MCF 10A (cell line): ENCODE measurements at regions of chr7 and their contacts with region 1.

Region 1: DNA sequence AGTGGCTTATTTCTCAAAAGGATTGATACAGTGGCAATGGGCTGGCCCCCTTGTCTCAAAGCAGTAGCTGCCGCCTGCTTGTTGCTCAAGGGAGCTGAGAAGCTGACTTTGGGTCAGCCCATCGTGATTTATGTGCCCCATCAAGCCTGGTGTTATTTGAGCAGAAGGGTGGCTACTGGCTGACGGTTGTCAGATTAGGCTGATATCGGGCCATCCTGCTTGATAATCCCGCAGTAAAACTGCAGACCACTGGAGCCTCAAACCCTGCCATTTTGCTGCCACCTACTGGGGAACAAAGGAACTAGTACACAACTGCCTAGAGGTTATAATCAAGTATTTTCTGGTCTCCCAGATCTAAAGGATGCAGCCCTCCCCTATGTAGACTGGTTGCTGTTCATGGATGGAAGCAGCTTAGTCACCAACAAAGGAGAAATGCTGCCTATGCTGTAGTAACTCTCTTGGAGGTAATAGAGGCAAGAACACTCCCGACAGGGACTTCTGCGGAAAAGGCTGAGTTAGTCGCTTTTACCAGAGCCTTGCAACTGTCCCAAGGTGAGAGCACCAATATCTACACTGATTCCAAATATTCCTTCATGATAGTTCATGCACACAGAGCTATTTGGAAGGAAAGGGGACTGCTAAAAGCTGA is 65.9 kb upstream of the ZNF92 start:
- DNase-seq: peak; percentile 68
- H3K4me3 Mint-ChIP-seq: no peak overlapping the region
- H3K27ac Mint-ChIP-seq: no peak overlapping the region
- H3K4me1 Mint-ChIP-seq: no peaks in the 10 kb centered on the region
- H3K27me3 Mint-ChIP-seq: no peaks in the 10 kb centered on the region
- CTCF ChIP-seq: peak; percentile 73

Region 2: DNA sequence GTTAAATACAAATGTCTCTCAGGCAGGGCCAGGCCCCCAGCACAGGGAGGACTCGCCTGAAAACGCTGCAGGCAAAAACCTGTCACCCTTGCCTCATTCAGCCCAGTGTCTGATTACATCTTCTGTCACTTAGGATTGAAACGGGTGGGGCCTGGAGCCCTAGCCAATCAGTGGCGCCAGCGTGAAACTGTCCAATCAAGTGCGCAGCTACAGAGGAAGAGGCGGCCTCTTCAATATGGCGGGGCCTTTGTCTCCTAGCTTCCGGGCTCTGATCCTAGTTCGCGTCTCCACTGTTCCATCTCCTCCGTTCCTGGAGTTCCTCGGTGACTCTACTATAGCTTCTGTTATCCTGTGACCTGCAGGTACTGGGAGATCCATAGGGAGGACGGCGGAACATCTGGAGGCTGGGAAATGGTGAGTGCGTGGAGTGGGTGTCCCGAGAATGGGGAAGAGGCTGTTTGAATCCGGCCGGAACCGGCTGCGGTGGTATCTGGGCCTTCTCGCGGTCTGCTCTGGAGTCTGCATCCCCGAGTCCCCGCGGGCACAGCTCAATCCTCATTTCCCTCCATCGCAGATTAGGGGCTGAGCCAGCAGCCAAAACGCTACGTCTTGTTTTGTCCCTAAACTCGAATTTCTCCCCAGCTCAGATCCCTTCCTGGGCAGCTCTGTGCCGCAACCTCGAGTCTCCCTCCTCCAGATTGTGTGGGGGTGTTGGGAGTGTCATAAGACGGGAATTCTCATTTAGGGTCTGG is 993.9 kb before region 1 on chr7 and contains the start of gene ZNF736:
- CTCF ChIA-PET with region 1: no interaction called
- POLR2A ChIA-PET with region 1: no interaction called
- intact Hi-C with region 1: no loop called
- DNase-seq: peak; percentile 97
- H3K4me3 Mint-ChIP-seq: peak within 1 kb of the TSS; percentile 97
- H3K27ac Mint-ChIP-seq: peak within 1 kb of the TSS; percentile 99
- H3K4me1 Mint-ChIP-seq: no peaks in the 10 kb centered on the region
- H3K27me3 Mint-ChIP-seq: no peaks in the 10 kb centered on the region
- CTCF ChIP-seq: no peak
- total RNA-seq, gene ZNF736: 9.2 and 13.1 TPM in 2 replicates

Region 3: DNA sequence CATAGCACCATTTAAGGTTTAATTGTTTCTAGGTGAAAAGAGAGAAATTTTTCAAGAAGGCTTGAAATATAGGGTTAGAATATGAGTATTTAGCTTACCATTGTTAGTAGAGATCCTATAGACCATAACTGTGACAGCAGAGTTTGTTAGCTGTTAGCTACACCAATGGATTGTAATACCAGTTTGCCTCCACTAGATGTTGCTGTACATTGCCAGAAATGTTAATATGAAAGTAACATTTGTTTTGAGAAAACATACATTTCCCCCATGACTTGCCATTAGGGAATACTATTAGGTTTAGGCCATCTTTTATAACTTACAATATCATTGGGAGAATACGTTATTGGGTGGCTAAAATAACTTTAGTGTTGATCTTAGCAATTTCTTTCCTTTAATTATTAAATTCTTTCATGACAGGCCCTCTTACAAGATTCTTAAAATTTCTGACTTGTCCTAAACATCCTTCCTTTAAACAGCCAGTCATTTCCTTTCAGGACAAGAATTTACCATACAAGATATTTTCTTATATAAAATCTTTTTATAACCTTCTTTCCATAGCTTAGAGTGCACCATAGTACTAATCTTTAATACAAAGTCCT is 356.4 kb before region 1 on chr7:
- CTCF ChIA-PET with region 1: interaction called, 71 read pairs
- POLR2A ChIA-PET with region 1: no interaction called
- intact Hi-C with region 1: loop called (anchors 1 kb)
- DNase-seq: peak; percentile 55
- H3K4me3 Mint-ChIP-seq: no peak overlapping the region
- H3K27ac Mint-ChIP-seq: no peak overlapping the region
- H3K4me1 Mint-ChIP-seq: no peaks in the 10 kb centered on the region
- H3K27me3 Mint-ChIP-seq: no peaks in the 10 kb centered on the region
- CTCF ChIP-seq: peak; percentile 73

Region 4: GRCh38 chr7:65269150-65269856 is 38.5 kb before region 1 on chr7:
- CTCF ChIA-PET with region 1: interaction called, 11 read pairs
- POLR2A ChIA-PET with region 1: no interaction called
- intact Hi-C with region 1: no loop called
- DNase-seq: peak; percentile 94
- H3K4me3 Mint-ChIP-seq: peak overlapping the region; percentile 78
- H3K27ac Mint-ChIP-seq: peak overlapping the region; percentile 7
- H3K4me1 Mint-ChIP-seq: no peaks in the 10 kb centered on the region
- H3K27me3 Mint-ChIP-seq: no peaks in the 10 kb centered on the region
- CTCF ChIP-seq: no peak

Region 5: DNA sequence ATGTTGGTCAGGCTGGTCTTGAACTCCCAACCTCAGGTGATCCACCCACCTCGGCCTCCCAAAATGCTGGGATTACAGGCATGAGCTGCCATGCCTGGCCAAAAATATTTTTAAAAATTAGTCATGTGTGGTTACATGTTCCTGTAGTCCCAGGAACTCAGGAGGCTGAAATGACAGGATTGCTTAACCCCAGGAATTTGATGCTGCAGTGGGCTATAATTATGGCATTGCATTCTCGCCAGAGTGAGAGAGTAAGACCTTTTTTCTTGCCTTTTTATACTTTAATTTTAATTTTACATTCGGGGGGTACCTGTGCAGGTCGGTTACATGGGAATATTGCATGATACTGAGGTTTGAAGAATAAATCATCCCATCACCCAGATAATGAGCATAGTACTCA is 20.8 kb before region 1 on chr7:
- CTCF ChIA-PET with region 1: interaction called, 24 read pairs
- POLR2A ChIA-PET with region 1: no interaction called
- intact Hi-C with region 1: no loop called
- DNase-seq: peak; percentile 48
- H3K4me3 Mint-ChIP-seq: no peak overlapping the region
- H3K27ac Mint-ChIP-seq: no peak overlapping the region
- H3K4me1 Mint-ChIP-seq: no peaks in the 10 kb centered on the region
- H3K27me3 Mint-ChIP-seq: no peaks in the 10 kb centered on the region
- CTCF ChIP-seq: no peak

Region 6: DNA sequence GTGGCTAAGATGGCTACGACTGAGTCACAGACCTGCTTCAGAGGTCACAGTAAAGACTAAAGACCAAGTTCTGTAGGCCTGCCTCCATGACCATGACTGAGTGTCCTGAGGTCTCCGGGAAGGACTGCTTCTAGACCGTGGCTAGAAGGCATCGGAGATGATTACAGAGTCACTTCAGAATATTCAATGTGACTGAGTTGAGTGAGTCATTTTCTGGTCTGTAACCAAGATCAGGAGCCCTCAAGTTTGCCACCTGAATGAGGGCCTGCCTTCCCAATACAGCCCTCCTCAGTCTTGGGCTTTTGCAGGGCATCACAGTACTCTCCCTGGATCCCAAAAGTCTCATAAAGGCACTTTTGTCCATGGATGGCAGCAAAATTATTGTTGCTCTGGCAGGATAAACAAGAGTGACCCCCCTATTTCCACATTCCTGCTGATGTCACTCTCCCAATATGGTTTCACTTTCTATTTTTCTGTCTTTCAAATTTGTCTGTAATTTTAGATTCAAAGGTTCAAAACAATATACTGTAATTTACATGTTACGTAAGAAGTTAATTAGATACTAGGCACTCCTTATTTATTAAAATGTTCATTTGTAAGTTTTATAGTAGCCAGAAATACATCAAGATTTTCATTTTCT is 18.1 kb after region 1 on chr7:
- CTCF ChIA-PET with region 1: interaction called, 37 read pairs
- POLR2A ChIA-PET with region 1: no interaction called
- intact Hi-C with region 1: no loop called
- DNase-seq: peak; percentile 1
- H3K4me3 Mint-ChIP-seq: no peak overlapping the region
- H3K27ac Mint-ChIP-seq: no peak overlapping the region
- H3K4me1 Mint-ChIP-seq: no peaks in the 10 kb centered on the region
- H3K27me3 Mint-ChIP-seq: no peaks in the 10 kb centered on the region
- CTCF ChIP-seq: no peak

Region 7: GRCh38 chr7:65438598-65438997 is 130.8 kb after region 1 on chr7:
- CTCF ChIA-PET with region 1: no interaction called
- POLR2A ChIA-PET with region 1: no interaction called
- intact Hi-C with region 1: no loop called
- DNase-seq: peak; percentile 57
- H3K4me3 Mint-ChIP-seq: no peak overlapping the region
- H3K27ac Mint-ChIP-seq: no peak overlapping the region
- H3K4me1 Mint-ChIP-seq: no peaks in the 10 kb centered on the region
- H3K27me3 Mint-ChIP-seq: no peaks in the 10 kb centered on the region
- CTCF ChIP-seq: no peak

Region 8: DNA sequence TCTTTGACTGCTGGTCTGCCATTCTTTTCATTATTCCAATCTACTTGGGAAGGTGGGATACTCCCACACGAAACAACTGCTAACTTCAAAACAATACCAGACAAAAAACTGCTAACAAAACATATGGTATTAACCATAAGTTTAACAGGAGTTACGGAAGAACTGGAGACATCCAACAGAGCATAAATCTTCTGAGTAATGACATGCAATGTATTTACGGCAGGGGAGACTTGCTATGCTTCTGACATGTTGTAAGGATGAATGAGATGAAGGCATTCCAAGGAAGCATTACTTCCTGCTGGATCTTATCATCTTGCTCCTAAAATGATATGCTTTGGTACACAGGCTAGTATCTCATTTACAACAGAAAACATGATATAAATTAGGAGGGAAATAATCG is 151.7 kb after region 1 on chr7:
- CTCF ChIA-PET with region 1: no interaction called
- POLR2A ChIA-PET with region 1: no interaction called
- intact Hi-C with region 1: no loop called
- DNase-seq: no peak
- H3K4me3 Mint-ChIP-seq: no peak overlapping the region
- H3K27ac Mint-ChIP-seq: no peak overlapping the region
- H3K4me1 Mint-ChIP-seq: peaks cover 5% of the 10 kb centered on the region
- H3K27me3 Mint-ChIP-seq: no peaks in the 10 kb centered on the region
- CTCF ChIP-seq: no peak